ENCODE measurements at regions of chr5 and their contacts with region 1.

Region 1: DNA sequence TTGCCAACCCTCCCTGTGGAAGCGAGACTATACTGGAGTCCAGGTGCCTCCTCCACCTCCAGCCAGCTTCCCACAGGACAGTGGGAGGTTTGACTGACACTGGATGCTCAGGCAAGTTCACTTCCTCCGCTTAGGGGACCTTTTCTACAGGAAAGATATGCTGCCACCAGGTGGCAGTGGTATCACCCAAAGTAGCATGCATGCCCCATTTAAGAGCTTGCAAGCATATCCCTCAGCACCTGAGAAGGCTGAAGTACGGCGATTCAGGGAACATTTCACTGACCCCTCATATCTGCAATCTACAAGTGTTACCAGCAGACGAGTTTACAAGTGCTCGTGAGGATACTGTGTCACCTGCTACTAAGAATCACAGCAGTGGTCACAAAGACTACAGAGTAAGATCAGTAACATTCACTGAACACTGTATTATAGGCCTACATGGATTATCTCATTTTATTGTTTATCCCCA is 75.5 kb downstream of the KLHL3 start:
- DNase-seq: peak; percentile 14 to 87
- H3K4me3 ChIP-seq: no peak overlapping the region
- H3K27ac ChIP-seq: peak overlapping the region; percentile 31 to 60
- H3K4me1 ChIP-seq: peaks cover 4 to 5% of the 10 kb centered on the region in 2 donors
- H3K27me3 ChIP-seq: no peaks in the 10 kb centered on the region
- CTCF ChIP-seq: peak; percentile 72 to 79 (median 76)

Region 2: GRCh38 chr5:136308212-136308795 is 1352.1 kb before region 1 on chr5:
- intact Hi-C with region 1: no loop called
- DNase-seq: no peak
- H3K4me3 ChIP-seq: no peak overlapping the region
- H3K27ac ChIP-seq: no peak overlapping the region
- H3K4me1 ChIP-seq: no peaks in the 10 kb centered on the region
- H3K27me3 ChIP-seq: no peaks in the 10 kb centered on the region
- CTCF ChIP-seq: no peak

Region 3: DNA sequence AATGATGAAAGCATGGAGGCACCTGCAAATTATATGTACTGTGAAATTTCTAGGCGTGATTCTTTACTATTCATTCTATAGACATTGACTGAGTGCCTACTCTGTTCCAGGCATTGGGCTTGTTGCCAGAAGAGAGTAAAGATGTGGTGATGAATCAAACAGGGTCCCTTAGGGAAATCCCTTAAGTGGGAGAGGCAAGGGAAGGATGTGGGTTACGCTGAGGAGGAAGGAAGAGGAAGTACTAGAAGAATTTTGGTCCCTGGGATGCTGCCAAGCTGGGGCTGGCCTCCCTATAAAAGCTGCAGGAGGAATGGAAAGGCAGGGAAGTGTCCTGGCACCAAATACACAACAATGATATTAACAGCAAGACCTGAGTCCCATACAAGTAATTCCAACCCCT is 84.5 kb before region 1 on chr5:
- intact Hi-C with region 1: no loop called
- DNase-seq: no peak
- H3K4me3 ChIP-seq: no peak overlapping the region
- H3K27ac ChIP-seq: no peak overlapping the region
- H3K4me1 ChIP-seq: no peaks in the 10 kb centered on the region
- H3K27me3 ChIP-seq: no peaks in the 10 kb centered on the region
- CTCF ChIP-seq: no peak

Region 4: DNA sequence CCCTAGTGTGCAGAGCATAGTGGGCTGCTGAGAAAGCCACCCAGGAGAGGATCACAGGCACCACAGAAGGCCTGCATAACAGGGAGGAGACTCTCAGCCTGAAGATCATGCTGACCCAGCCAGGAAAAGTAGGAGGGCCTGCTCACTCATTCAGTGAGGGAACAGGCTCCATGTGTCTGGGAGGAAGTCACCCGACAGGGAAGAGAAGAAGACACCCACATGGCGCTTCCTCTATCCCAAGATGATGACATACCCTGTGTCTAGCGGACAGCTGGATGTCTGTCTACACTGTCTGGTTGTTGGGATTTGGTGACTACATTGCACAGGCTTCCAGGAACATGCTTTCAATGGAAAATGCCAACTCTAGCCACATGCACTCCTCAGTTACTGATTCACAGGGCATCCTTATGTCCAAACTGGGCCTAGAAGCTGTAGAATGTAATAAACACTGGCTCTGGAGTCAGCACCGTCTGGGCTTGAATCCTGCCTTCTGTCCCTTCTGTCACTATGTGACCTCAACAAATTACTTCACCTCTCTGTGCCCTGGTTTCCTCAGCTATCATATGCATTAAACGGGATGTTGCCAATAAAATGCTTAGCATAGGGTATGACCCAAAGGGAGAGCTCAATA is 27.9 kb after region 1 on chr5:
- intact Hi-C with region 1: no loop called
- DNase-seq: no peak
- H3K4me3 ChIP-seq: no peak overlapping the region
- H3K27ac ChIP-seq: no peak overlapping the region
- H3K4me1 ChIP-seq: peaks cover 0 to 5% of the 10 kb centered on the region in 2 donors
- H3K27me3 ChIP-seq: no peaks in the 10 kb centered on the region
- CTCF ChIP-seq: no peak

Region 5: GRCh38 chr5:137735555-137736284 is 75.3 kb after region 1 on chr5 and contains the start of gene KLHL3:
- intact Hi-C with region 1: loop called (anchors 2 kb)
- DNase-seq: peak in 1 of 2 donors; percentile 70
- H3K4me3 ChIP-seq: peak within 1 kb of the TSS; percentile 52 to 66
- H3K27ac ChIP-seq: peak within 1 kb of the TSS; percentile 39 to 55
- H3K4me1 ChIP-seq: peaks cover 0 to 7% of the 10 kb centered on the region in 2 donors
- H3K27me3 ChIP-seq: no peaks in the 10 kb centered on the region
- CTCF ChIP-seq: peak in 1 of 3 experiments; percentile 25
- total RNA-seq, gene KLHL3: 7.5 TPM

Region 6: GRCh38 chr5:137743031-137743640 is 82.8 kb after region 1 on chr5:
- intact Hi-C with region 1: loop called (anchors 1 kb)
- DNase-seq: no peak
- H3K4me3 ChIP-seq: no peak overlapping the region
- H3K27ac ChIP-seq: peak overlapping the region in 1 of 2 donors; percentile 35
- H3K4me1 ChIP-seq: peaks cover 0 to 5% of the 10 kb centered on the region in 2 donors
- H3K27me3 ChIP-seq: no peaks in the 10 kb centered on the region
- CTCF ChIP-seq: peak; percentile 56 to 68 (median 61)